ENCODE measurements at regions of chr19 and their contacts with region 1.

Region 1: GRCh38 chr19:408898-409515 is at the start of gene C2CD4C:
- DNase-seq: peak; percentile 54
- H3K4me3 ChIP-seq: peak within 1 kb of the TSS; percentile 63
- H3K27ac ChIP-seq: no peak within 1 kb of the TSS
- H3K4me1 ChIP-seq: peaks cover 7% of the 10 kb centered on the region
- H3K27me3 ChIP-seq: peaks cover 7% of the 10 kb centered on the region
- CTCF ChIP-seq: no peak
- total RNA-seq, gene C2CD4C: 1.8 and 3.5 TPM in 2 replicates

Region 2: DNA sequence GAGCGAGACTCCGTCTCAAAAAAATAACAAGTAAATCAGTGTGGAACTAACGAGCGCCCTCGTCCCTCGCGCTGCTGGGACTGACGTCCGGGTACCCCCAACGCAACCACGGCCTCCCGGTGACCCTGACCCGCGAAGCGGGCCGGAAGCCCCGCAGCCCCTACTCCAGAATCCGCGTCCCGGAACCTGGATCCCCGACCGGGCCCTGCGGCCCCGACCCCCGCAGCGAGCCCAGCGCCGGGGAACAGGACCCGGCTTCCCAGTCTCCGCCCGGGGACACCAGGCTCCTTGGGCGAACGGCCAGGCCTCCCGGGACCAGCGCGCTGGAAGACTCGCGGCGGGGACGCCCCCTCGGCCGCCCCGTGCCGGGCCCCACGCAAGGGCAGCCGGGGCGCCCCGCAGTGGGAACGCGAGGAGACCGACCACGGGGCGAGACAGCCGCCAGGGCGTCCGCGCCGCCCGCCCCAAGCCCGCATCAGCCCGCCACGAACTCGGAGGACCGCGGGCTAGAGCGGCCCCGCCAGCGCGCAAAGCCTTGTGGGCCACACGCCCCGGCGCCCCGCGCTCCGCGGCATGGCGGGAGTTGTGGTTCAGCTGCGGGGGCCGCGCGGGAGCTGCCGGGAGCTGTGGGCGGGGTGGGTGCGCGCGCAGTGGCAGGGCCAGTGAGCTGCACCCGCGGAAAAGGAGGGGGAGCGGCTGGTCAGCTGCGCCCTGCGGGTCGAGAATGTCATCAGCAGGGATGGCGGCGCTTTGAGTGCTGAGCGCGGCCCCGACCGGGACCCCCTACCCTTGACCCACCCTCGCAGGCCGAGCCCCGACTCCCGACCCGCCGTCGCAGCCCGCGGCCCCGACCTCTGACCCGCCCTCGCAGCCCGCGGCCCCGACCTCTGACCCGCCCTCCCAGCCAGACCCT is 79.8 kb after region 1 on chr19:
- CTCF ChIA-PET with region 1: no interaction called
- POLR2A ChIA-PET with region 1: no interaction called
- intact Hi-C with region 1: loop called (anchors 10 kb)
- DNase-seq: peak; percentile 97
- H3K4me3 ChIP-seq: peak overlapping the region; percentile 82
- H3K27ac ChIP-seq: peak overlapping the region; percentile 96
- H3K4me1 ChIP-seq: no peaks in the 10 kb centered on the region
- H3K27me3 ChIP-seq: peaks cover 21% of the 10 kb centered on the region
- CTCF ChIP-seq: no peak

Measured in A673 (cell line).